ENCODE measurements at regions of chr18 and their contacts with region 1.

Region 1: DNA sequence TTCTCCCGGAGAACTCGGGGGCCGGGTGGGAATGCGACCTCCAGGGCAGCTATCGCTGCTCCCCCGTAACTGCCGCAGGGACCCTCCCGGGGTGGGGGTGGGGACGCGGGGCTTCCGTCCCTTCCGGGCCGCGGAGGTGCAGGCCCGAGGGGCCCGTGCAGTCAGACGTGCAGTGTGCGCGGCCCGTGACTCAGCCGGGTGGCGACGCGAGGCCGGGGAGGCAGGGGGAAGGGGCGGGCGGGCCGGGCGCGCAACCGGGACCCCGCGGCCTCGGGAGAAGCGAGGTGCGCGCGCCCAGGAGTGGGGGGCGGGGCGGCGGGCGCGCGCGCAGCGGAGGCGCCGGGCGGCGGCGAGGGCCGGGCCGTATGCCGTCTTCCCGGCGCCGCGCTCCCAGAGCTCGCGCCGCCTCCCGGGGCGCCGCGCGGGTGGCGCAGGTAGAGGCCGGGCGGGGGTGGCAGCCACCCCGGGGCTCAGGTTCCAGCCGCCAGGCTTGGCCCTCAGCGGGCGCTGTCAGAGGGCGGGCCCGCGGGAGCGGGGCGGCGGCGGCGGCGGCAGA is 25.0 kb upstream of the SMAD7 start:
- DNase-seq: peak in 8 of 9 donors; percentile 29 to 66 (median 38)
- ATAC-seq: peak; percentile 79
- H3K4me3 ChIP-seq: peak overlapping the region; percentile 50
- H3K4me3 Mint-ChIP-seq: peak overlapping the region in 7 of 10 donors; percentile 35 to 83 (median 59)
- H3K27ac ChIP-seq: no peak overlapping the region
- H3K27ac Mint-ChIP-seq: no peak overlapping the region
- H3K4me1 ChIP-seq: no peaks in the 10 kb centered on the region
- H3K4me1 Mint-ChIP-seq: peaks cover 0 to 16% (median 11%) of the 10 kb centered on the region in 7 donors
- H3K27me3 ChIP-seq: no peaks in the 10 kb centered on the region
- H3K27me3 Mint-ChIP-seq: peaks cover 8 to 65% (median 18%) of the 10 kb centered on the region in 5 donors

Region 2: DNA sequence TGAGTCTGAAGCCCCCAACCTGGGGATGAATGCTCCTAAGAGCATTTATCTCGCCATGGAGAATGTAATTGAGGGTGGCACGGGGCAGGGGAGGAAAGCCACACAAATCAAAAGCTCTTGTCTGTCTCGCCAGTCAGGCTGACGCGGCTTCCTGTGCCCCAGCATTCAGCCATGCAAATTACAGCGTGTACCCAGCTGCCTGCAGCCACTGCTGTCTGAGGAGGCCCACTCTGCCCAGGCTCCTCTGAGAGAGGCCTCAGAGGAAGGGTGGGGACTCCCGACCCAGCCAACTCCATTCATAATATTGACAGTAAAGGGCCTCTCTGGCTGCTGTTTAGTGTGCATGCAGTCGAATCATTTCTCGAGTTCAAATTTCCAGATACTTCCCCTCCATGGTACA is 46.9 kb before region 1 on chr18:
- CTCF ChIA-PET with region 1: no interaction called
- POLR2A ChIA-PET with region 1: no interaction called
- intact Hi-C with region 1: loop called in 1 of 2 experiments (anchors 10 kb)
- DNase-seq: peak; percentile 46 to 76 (median 64)
- ATAC-seq: peak; percentile 87
- H3K4me3 ChIP-seq: peak overlapping the region; percentile 12
- H3K4me3 Mint-ChIP-seq: peak overlapping the region; percentile 72 to 86 (median 79)
- H3K27ac ChIP-seq: no peak overlapping the region
- H3K27ac Mint-ChIP-seq: peak overlapping the region; percentile 50 to 98 (median 74)
- H3K4me1 ChIP-seq: peaks cover 62 to 73% of the 10 kb centered on the region in 2 donors
- H3K4me1 Mint-ChIP-seq: peaks cover 78 to 98% (median 96%) of the 10 kb centered on the region in 7 donors
- H3K27me3 ChIP-seq: no peaks in the 10 kb centered on the region
- H3K27me3 Mint-ChIP-seq: no peaks in the 10 kb centered on the region

Measured in naive thymus-derived CD4-positive, alpha-beta T cell (primary cell).